ENCODE measurements at regions of chr12 and their contacts with region 1.

Region 1: DNA sequence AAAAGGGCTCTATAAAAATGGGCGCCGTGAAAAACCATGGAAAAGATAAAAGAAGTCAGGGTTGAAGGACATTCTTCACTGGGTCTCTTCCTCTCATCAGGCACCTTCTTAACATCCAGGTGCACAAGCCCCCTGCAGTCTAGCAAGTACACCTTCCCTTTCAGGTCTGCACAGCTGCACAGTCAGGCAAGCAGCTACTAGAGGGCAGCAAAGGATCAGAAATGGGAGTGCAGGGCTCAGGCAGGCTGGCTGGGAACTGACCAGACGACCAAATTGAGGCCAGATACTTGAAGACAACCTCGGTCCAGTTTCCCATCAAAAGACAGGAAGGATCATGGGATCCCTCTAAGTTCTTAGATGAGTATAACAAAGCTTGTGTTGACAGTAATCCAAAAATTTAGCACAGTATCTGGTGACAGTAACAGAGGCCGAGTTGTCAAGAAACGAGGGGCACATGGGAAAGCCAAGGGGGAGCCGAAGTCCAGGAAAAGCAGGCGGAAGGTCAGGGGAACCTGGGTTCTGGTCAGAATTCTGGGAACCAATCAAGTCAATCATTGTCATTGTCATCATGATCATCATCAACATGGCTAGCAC is 10.1 kb upstream of the GRIP1 start:
- DNase-seq: no peak
- ATAC-seq: peak; percentile 41
- H3K4me3 ChIP-seq: no peak overlapping the region
- H3K27ac ChIP-seq: no peak overlapping the region
- H3K4me1 ChIP-seq: no peaks in the 10 kb centered on the region
- H3K27me3 ChIP-seq: no peaks in the 10 kb centered on the region

Region 2: GRCh38 chr12:66707002-66707697 is 18.2 kb after region 1 on chr12:
- intact Hi-C with region 1: loop called in 1 of 2 experiments (anchors 2 kb)
- DNase-seq: no peak
- ATAC-seq: no peak
- H3K4me3 ChIP-seq: no peak overlapping the region
- H3K27ac ChIP-seq: no peak overlapping the region
- H3K4me1 ChIP-seq: no peaks in the 10 kb centered on the region
- H3K27me3 ChIP-seq: peaks cover 0 to 2% of the 10 kb centered on the region in 2 donors

Measured in aorta (tissue), 5 donors.